ENCODE measurements at regions of chr2 and their contacts with region 1.

Region 1: GRCh38 chr2:169824373-169825333 is at the start of gene METTL5:
- DNase-seq: peak; percentile 83
- H3K4me3 Mint-ChIP-seq: peak within 1 kb of the TSS; percentile 84
- H3K27ac Mint-ChIP-seq: peak within 1 kb of the TSS; percentile 71
- H3K4me1 Mint-ChIP-seq: peaks cover 56% of the 10 kb centered on the region
- H3K27me3 Mint-ChIP-seq: no peaks in the 10 kb centered on the region
- total RNA-seq, gene METTL5: 111 to 116 TPM

Region 2: GRCh38 chr2:169479257-169480078 is 345.2 kb before region 1 on chr2 and contains the start of gene BBS5:
- CTCF ChIA-PET with region 1: no interaction called
- intact Hi-C with region 1: loop called (anchors 5 kb)
- DNase-seq: peak; percentile 87
- H3K4me3 Mint-ChIP-seq: peak within 1 kb of the TSS; percentile 91
- H3K27ac Mint-ChIP-seq: no peak within 1 kb of the TSS
- H3K4me1 Mint-ChIP-seq: peaks cover 10% of the 10 kb centered on the region
- H3K27me3 Mint-ChIP-seq: no peaks in the 10 kb centered on the region
- total RNA-seq, gene BBS5: 2.1 to 2.2 TPM

Region 3: GRCh38 chr2:169584005-169584877 is 240.4 kb before region 1 on chr2 and contains the start of gene PPIG:
- CTCF ChIA-PET with region 1: no interaction called
- intact Hi-C with region 1: loop called (anchors 1 kb)
- DNase-seq: peak; percentile 94
- H3K4me3 Mint-ChIP-seq: peak within 1 kb of the TSS; percentile 98
- H3K27ac Mint-ChIP-seq: peak within 1 kb of the TSS; percentile 100
- H3K4me1 Mint-ChIP-seq: peaks cover 33% of the 10 kb centered on the region
- H3K27me3 Mint-ChIP-seq: no peaks in the 10 kb centered on the region
- total RNA-seq, gene PPIG: 53.4 to 56.6 TPM

Region 4: GRCh38 chr2:169798718-169799592 is 25.7 kb before region 1 on chr2 and contains the start of gene SSB:
- CTCF ChIA-PET with region 1: interaction called, 6 read pairs
- intact Hi-C with region 1: loop called (anchors 1 kb)
- DNase-seq: peak; percentile 97
- H3K4me3 Mint-ChIP-seq: peak within 1 kb of the TSS; percentile 88
- H3K27ac Mint-ChIP-seq: peak within 1 kb of the TSS; percentile 95
- H3K4me1 Mint-ChIP-seq: peaks cover 29% of the 10 kb centered on the region
- H3K27me3 Mint-ChIP-seq: peaks cover 2% of the 10 kb centered on the region
- total RNA-seq, gene SSB: 122 to 129 TPM

Region 5: DNA sequence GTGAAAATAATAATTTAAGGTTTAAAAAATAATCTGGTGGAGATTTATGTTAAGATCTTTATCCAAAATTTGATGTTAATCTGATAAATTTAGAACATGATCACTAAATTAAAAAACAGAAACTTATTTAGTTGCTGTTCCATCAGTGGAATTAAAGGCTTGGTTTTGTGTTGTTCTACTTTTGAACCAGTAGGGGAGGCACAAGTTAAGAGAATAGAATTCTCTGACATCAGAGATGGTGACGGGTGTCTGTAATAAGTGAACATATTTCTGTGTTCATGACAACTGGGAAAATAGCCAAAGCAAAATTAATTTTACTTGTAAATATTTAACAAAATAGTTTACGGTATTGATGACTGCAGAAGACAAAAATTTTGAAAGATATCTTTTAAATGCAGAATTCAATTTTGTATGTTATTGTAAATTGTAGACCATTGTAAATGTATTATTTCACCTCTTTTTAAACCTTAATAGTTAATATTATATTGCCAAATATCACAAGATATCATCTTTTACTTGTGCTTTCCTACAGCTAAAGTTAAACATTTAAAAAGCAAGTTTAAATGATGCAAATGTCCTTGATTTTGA is 108.6 kb after region 1 on chr2:
- CTCF ChIA-PET with region 1: interaction called, 8 read pairs
- intact Hi-C with region 1: loop called (anchors 1 kb)
- DNase-seq: no peak
- H3K4me3 Mint-ChIP-seq: no peak overlapping the region
- H3K27ac Mint-ChIP-seq: no peak overlapping the region
- H3K4me1 Mint-ChIP-seq: no peaks in the 10 kb centered on the region
- H3K27me3 Mint-ChIP-seq: no peaks in the 10 kb centered on the region

Region 6: DNA sequence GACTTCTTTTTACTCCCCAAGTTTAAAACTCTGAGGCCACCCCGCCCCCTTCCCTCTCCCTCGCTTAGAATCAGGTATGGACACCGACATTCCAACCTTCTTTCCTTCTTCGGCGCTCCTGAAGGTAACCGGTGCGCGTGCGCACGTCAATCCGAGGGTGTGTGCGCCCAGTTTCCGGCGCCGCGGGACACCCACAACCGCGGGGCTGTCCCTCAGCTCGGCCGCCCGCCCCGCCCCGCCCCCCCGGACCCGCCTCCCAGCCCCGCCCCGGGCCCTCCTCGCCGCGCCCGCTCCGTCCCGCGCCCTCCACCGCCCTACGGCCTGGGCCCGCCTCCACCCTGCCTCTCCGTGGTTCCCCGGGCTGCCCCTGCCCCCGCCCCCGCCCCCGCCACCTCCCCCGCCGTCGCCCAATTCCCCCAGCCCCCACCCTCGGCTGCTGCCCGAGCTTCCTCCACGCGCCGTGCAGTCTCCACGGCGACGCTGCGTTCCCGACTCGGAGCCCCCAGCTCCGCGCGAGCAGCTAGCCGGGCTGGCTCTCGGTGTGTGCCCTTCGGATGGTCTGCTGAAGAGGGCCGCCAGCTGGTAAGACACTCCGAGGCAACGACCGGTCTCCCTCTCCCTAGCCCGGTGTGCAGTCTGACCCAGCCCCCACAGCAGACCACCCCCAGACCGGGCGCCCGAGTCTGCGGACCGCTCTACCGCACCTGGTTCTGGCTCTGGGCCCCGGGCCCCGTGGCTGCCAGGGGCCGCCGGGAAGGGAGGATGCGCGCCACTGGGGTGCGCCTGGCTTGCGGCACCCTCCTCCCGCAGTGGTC is 946.2 kb after region 1 on chr2:
- CTCF ChIA-PET with region 1: no interaction called
- intact Hi-C with region 1: loop called (anchors 10 kb)
- DNase-seq: peak; percentile 69
- H3K4me3 Mint-ChIP-seq: peak overlapping the region; percentile 85
- H3K27ac Mint-ChIP-seq: no peak overlapping the region
- H3K4me1 Mint-ChIP-seq: peaks cover 7% of the 10 kb centered on the region
- H3K27me3 Mint-ChIP-seq: peaks cover 9% of the 10 kb centered on the region